ENCODE measurements at regions of chr10 and their contacts with region 1.

Region 1: GRCh38 chr10:103685880-103686669 is 169.3 kb downstream of the SH3PXD2A start:
- DNase-seq: peak; percentile 86
- H3K4me3 ChIP-seq: no peak overlapping the region
- H3K27ac ChIP-seq: peak overlapping the region; percentile 49 to 77 (median 72)
- H3K4me1 ChIP-seq: peaks cover 3 to 24% (median 7%) of the 10 kb centered on the region in 4 donors
- H3K27me3 ChIP-seq: no peaks in the 10 kb centered on the region
- CTCF ChIP-seq: peak; percentile 95 to 97 (median 97)
- EP300 ChIP-seq: no peak
- POLR2A ChIP-seq: no peak

Region 2: DNA sequence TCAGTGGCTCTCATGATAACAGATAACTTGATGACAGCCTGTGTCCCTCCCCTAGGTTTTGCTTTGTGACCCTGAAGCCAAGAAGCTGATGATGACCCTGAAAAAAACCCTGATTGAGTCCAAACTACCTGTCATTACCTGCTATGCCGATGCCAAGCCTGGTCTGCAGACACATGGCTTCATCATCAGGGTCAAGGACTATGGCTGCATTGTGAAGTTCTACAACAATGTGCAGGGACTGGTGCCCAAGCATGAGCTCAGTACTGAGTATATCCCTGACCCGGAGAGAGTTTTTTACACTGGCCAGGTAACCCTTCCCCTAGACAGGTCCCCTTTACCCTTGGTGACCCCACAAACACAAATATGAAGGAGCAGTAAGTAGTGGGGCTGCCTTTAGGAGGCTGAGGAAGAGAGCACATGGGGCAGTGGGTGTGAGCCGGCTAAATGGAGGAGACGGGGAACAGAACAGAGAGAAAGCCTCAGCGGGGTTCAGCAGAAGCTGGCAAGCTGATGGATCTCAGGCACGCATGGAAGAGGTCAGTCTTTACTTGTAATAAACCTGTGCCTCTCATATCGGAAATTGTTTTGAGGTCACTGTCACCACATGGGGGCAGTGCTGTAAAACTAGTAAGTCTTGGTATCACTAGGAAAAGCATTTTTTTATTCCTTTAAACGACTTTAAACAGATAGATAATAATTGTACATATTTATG is 269.5 kb before region 1 on chr10:
- in situ Hi-C with region 1: loop called in 1 of 4 experiments (anchors 25 kb)
- intact Hi-C with region 1: no loop called
- DNase-seq: peak; percentile 67
- H3K4me3 ChIP-seq: no peak overlapping the region
- H3K27ac ChIP-seq: no peak overlapping the region
- H3K4me1 ChIP-seq: no peaks in the 10 kb centered on the region
- H3K27me3 ChIP-seq: no peaks in the 10 kb centered on the region
- CTCF ChIP-seq: peak; percentile 49 to 65 (median 60)
- EP300 ChIP-seq: no peak
- POLR2A ChIP-seq: no peak

Region 3: GRCh38 chr10:103592186-103593021 is 93.7 kb before region 1 on chr10:
- in situ Hi-C with region 1: loop called in 1 of 4 experiments (anchors 10 kb)
- intact Hi-C with region 1: no loop called
- DNase-seq: peak; percentile 27
- H3K4me3 ChIP-seq: no peak overlapping the region
- H3K27ac ChIP-seq: no peak overlapping the region
- H3K4me1 ChIP-seq: no peaks in the 10 kb centered on the region
- H3K27me3 ChIP-seq: no peaks in the 10 kb centered on the region
- CTCF ChIP-seq: peak; percentile 37 to 53 (median 49)
- EP300 ChIP-seq: no peak
- POLR2A ChIP-seq: no peak

Region 4: GRCh38 chr10:103598654-103599115 is 87.4 kb before region 1 on chr10:
- in situ Hi-C with region 1: loop called (anchors 5 to 10 kb)
- intact Hi-C with region 1: loop called (anchors 2 kb)
- DNase-seq: peak; percentile 70
- H3K4me3 ChIP-seq: no peak overlapping the region
- H3K27ac ChIP-seq: peak overlapping the region in 2 of 4 donors; percentile 16 to 62
- H3K4me1 ChIP-seq: peaks cover 0 to 16% (median 10%) of the 10 kb centered on the region in 4 donors
- H3K27me3 ChIP-seq: no peaks in the 10 kb centered on the region
- CTCF ChIP-seq: peak; percentile 56 to 82 (median 62)
- EP300 ChIP-seq: no peak
- POLR2A ChIP-seq: peak; percentile 11

Region 5: GRCh38 chr10:103605359-103606095 is 80.5 kb before region 1 on chr10:
- in situ Hi-C with region 1: loop called in 3 of 4 experiments (anchors 5 kb)
- intact Hi-C with region 1: no loop called
- DNase-seq: peak; percentile 60
- H3K4me3 ChIP-seq: no peak overlapping the region
- H3K27ac ChIP-seq: peak overlapping the region in 3 of 4 donors; percentile 7 to 27 (median 10)
- H3K4me1 ChIP-seq: peaks cover 0 to 5% (median under 1%) of the 10 kb centered on the region in 4 donors
- H3K27me3 ChIP-seq: no peaks in the 10 kb centered on the region
- CTCF ChIP-seq: peak; percentile 73 to 85 (median 77)
- EP300 ChIP-seq: no peak
- POLR2A ChIP-seq: no peak